Activated naive CD4-positive, alpha-beta T cell treated with anti-CD3 and anti-CD28 coated beads for 36 hours (primary cell): ENCODE measurements at regions of chr12 and their contacts with region 1.

Region 1: GRCh38 chr12:11836282-11837151 is 187.0 kb downstream of the ETV6 start:
- DNase-seq: peak; percentile 92
- H3K4me3 Mint-ChIP-seq: no peak overlapping the region
- H3K27ac Mint-ChIP-seq: peak overlapping the region; percentile 97
- H3K4me1 Mint-ChIP-seq: peaks cover 68% of the 10 kb centered on the region
- H3K27me3 Mint-ChIP-seq: no peaks in the 10 kb centered on the region

Region 2: GRCh38 chr12:11730299-11731041 is 106.0 kb before region 1 on chr12:
- CTCF ChIA-PET with region 1: no interaction called
- intact Hi-C with region 1: loop called (anchors 1 kb)
- DNase-seq: peak; percentile 27
- H3K4me3 Mint-ChIP-seq: no peak overlapping the region
- H3K27ac Mint-ChIP-seq: peak overlapping the region; percentile 85
- H3K4me1 Mint-ChIP-seq: peaks cover 86% of the 10 kb centered on the region
- H3K27me3 Mint-ChIP-seq: no peaks in the 10 kb centered on the region

Region 3: DNA sequence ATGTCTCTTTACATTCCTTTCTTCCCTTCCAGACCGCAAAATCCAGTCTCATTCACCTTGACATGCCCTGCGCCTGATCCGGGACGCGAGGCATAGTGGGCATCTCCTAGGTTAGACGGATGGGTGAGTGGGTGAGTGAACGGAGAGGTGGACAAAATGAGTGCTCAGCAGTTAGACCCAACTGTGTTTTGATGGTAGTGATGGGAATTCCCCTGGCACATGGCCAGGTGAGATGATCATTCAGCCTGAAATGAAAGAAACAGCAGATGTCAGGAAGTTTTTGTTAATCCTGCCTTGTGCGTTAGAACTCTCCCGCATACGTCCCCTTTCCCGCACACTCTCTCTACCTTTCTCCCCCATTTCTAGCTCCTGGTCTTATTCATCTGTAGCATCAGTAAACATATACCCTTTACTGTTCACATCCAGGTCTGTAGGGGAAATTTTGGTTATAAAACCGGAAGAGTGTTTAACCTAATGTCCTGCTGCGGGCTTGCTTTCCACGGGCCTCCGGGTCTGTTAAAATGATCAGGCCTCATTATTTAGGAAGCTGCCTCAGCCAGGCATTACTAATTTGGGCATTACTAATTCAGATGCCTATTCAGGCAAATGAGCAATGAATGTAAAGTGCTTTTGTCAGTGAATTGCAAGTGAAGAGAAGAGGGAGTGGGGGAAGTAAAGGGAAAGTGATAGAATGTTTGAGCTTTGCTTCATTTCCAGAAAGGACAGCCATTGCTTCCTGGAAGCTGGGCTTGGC is 14.3 kb before region 1 on chr12:
- CTCF ChIA-PET with region 1: interaction called, 4 read pairs
- intact Hi-C with region 1: loop called (anchors 1 kb)
- DNase-seq: peak; percentile 83
- H3K4me3 Mint-ChIP-seq: peak overlapping the region; percentile 44
- H3K27ac Mint-ChIP-seq: peak overlapping the region; percentile 91
- H3K4me1 Mint-ChIP-seq: peaks cover 61% of the 10 kb centered on the region
- H3K27me3 Mint-ChIP-seq: no peaks in the 10 kb centered on the region

Region 4: GRCh38 chr12:11901701-11902524 is 65.4 kb after region 1 on chr12:
- CTCF ChIA-PET with region 1: no interaction called
- intact Hi-C with region 1: loop called (anchors 1 kb)
- DNase-seq: peak; percentile 56
- H3K4me3 Mint-ChIP-seq: peak overlapping the region; percentile 54
- H3K27ac Mint-ChIP-seq: peak overlapping the region; percentile 79
- H3K4me1 Mint-ChIP-seq: peaks cover 35% of the 10 kb centered on the region
- H3K27me3 Mint-ChIP-seq: no peaks in the 10 kb centered on the region

Region 5: DNA sequence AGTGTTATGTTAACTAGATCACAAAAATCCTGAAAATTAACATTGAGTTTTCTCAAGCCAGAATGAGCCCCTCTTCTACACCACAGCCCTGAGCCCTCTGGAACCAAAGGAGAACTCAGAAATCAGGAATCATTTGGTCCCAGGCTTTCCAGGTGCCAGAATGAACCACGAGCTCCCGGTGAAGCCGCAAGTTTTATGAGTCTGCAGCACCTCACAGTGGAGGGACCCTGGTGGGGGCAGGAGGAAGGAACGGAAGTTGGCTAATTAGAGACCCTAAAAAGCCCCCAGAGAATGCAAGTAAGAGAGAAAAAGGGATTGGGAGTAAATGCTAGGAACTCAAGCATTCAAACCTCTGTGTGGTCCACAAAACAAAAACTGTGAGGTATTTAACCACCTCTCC is 181.3 kb after region 1 on chr12:
- CTCF ChIA-PET with region 1: no interaction called
- intact Hi-C with region 1: loop called (anchors 1 kb)
- DNase-seq: no peak
- H3K4me3 Mint-ChIP-seq: no peak overlapping the region
- H3K27ac Mint-ChIP-seq: peak overlapping the region; percentile 95
- H3K4me1 Mint-ChIP-seq: peaks cover 66% of the 10 kb centered on the region
- H3K27me3 Mint-ChIP-seq: no peaks in the 10 kb centered on the region